Activated CD4-positive, alpha-beta T cell treated with anti-CD3 and anti-CD28 coated beads, Interleukin-2, amount 10 ng/mL, durations not matched to agents 24 days and 14 days (primary cell): ENCODE measurements at regions of chr12 and their contacts with region 1.

Region 1: DNA sequence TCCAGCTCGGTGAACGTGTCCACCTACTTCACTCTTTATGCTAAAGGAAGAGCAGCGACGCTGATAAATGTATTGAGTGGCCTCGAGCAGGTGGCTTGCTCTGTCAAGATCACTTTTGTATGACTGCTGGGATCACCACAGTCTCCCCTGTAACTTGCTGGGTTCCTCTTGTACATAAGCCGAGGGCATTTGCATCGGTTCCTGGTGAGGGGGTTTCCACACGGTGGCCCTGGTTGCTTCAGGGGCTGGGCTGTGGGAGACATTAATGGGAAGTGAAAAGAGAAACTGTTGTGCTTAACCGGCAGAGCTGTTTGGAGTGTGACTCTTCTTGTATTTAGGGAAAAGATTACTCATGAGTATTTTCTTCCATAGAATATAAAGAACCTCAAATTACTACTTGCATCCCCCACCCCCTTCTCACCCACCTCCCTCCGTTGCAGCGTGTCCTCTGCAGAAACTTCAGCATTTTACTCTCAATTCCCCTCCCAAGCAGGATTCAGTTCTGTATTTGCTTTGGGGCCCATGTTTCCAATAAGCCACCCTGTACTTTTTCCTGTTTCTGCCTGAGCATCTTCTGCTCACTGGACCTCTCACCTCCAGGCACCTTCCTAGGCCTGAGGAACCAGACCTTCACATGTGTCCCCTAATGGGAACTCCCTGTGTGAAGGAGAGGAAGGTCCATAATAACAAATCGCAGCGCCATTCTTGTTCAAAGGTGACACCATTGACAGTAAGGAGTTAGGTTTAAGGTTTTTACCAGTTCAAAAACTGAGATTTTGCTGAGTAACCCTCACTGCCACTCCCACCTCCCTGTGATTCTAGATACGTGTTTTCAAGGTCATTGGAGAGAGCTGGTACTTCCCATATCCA is 187.0 kb downstream of the ETV6 start:
- DNase-seq: peak; percentile 84
- H3K4me3 Mint-ChIP-seq: peak overlapping the region; percentile 55
- H3K27ac Mint-ChIP-seq: peak overlapping the region; percentile 97
- H3K4me1 Mint-ChIP-seq: peaks cover 76% of the 10 kb centered on the region
- H3K27me3 Mint-ChIP-seq: no peaks in the 10 kb centered on the region

Region 2: GRCh38 chr12:11581179-11581755 is 255.2 kb before region 1 on chr12:
- intact Hi-C with region 1: loop called (anchors 2 kb)
- DNase-seq: peak; percentile 90
- H3K4me3 Mint-ChIP-seq: no peak overlapping the region
- H3K27ac Mint-ChIP-seq: no peak overlapping the region
- H3K4me1 Mint-ChIP-seq: peaks cover 26% of the 10 kb centered on the region
- H3K27me3 Mint-ChIP-seq: peaks cover 8% of the 10 kb centered on the region

Region 3: GRCh38 chr12:11730299-11731041 is 106.0 kb before region 1 on chr12:
- intact Hi-C with region 1: loop called (anchors 2 kb)
- DNase-seq: peak; percentile 69
- H3K4me3 Mint-ChIP-seq: peak overlapping the region; percentile 83
- H3K27ac Mint-ChIP-seq: peak overlapping the region; percentile 95
- H3K4me1 Mint-ChIP-seq: peaks cover 80% of the 10 kb centered on the region
- H3K27me3 Mint-ChIP-seq: no peaks in the 10 kb centered on the region

Region 4: DNA sequence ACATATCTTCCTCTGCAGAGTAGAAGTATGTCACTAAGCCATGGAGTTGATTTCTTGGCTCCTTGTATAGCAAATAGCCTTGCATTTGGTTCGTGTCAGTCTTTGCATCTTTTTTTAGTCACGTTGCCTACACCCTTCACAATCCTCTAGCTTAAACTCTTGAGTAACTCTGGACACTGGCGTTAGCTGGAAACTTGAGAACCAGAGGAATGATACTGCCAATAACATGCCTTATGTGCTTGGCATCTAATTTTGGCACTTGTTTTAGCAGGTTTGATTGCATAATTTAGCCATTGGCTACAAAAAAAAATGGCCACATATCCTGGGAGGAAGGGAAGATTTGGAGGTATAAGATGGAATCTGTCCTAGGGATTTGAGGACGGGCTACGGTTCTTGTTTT is 50.8 kb before region 1 on chr12:
- intact Hi-C with region 1: no loop called
- DNase-seq: no peak
- H3K4me3 Mint-ChIP-seq: no peak overlapping the region
- H3K27ac Mint-ChIP-seq: peak overlapping the region; percentile 31
- H3K4me1 Mint-ChIP-seq: peaks cover 43% of the 10 kb centered on the region
- H3K27me3 Mint-ChIP-seq: no peaks in the 10 kb centered on the region

Region 5: GRCh38 chr12:11801643-11802297 is 34.7 kb before region 1 on chr12:
- intact Hi-C with region 1: no loop called
- DNase-seq: no peak
- H3K4me3 Mint-ChIP-seq: no peak overlapping the region
- H3K27ac Mint-ChIP-seq: peak overlapping the region; percentile 46
- H3K4me1 Mint-ChIP-seq: peaks cover 61% of the 10 kb centered on the region
- H3K27me3 Mint-ChIP-seq: no peaks in the 10 kb centered on the region

Region 6: GRCh38 chr12:11812586-11813427 is 23.7 kb before region 1 on chr12:
- intact Hi-C with region 1: loop called (anchors 2 kb)
- DNase-seq: peak; percentile 71
- H3K4me3 Mint-ChIP-seq: peak overlapping the region; percentile 74
- H3K27ac Mint-ChIP-seq: peak overlapping the region; percentile 88
- H3K4me1 Mint-ChIP-seq: peaks cover 71% of the 10 kb centered on the region
- H3K27me3 Mint-ChIP-seq: no peaks in the 10 kb centered on the region

Region 7: GRCh38 chr12:11853126-11853525 is 16.6 kb after region 1 on chr12:
- intact Hi-C with region 1: no loop called
- DNase-seq: no peak
- H3K4me3 Mint-ChIP-seq: no peak overlapping the region
- H3K27ac Mint-ChIP-seq: peak overlapping the region; percentile 48
- H3K4me1 Mint-ChIP-seq: peaks cover 45% of the 10 kb centered on the region
- H3K27me3 Mint-ChIP-seq: no peaks in the 10 kb centered on the region

Region 8: GRCh38 chr12:11901701-11902524 is 65.4 kb after region 1 on chr12:
- intact Hi-C with region 1: loop called (anchors 1 kb)
- DNase-seq: peak; percentile 72
- H3K4me3 Mint-ChIP-seq: peak overlapping the region; percentile 58
- H3K27ac Mint-ChIP-seq: peak overlapping the region; percentile 97
- H3K4me1 Mint-ChIP-seq: peaks cover 62% of the 10 kb centered on the region
- H3K27me3 Mint-ChIP-seq: no peaks in the 10 kb centered on the region

Region 9: GRCh38 chr12:12032851-12033588 is 196.5 kb after region 1 on chr12:
- intact Hi-C with region 1: loop called (anchors 1 kb)
- DNase-seq: peak; percentile 90
- H3K4me3 Mint-ChIP-seq: peak overlapping the region; percentile 81
- H3K27ac Mint-ChIP-seq: peak overlapping the region; percentile 93
- H3K4me1 Mint-ChIP-seq: peaks cover 59% of the 10 kb centered on the region
- H3K27me3 Mint-ChIP-seq: no peaks in the 10 kb centered on the region